Right ventricle myocardium inferior (tissue), 1 donor: ENCODE measurements at regions of chr10 and their contacts with region 1.

Region 1: DNA sequence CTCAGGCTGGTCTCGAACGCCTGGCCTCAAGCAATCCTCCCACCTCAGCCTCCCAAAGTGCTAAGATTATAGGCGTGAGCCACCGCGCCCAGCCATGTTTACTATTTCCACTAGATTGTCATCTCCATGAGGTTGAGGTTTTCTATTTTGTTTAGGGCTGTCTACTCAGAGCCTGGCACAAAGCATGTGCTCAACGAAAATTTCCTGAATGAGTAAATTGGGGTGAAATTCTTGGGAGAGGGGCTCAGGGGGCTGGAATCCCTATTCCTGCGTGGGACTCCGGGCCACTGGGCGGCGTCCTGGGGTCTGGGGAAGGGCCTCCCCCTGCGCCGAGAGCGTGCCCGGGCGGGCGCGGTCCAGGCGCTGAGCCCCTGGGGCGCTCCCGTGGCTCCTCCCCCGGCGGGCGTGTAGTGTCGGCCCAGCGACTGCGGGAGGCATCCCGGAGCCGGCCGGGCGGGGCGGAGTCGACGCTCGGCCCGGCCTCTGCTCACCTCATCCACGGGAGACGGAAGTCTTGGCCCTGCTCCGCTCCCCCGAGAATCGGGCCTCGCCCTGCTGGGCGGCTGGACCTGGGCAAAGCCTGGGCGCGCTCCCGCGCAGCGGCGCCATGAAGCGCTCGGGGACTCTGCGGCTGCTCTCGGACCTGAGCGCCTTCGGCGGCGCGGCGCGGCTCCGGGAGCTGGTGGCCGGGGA is at the start of gene HPS6:
- DNase-seq: peak; percentile 96
- ATAC-seq: peak; percentile 98
- total RNA-seq, gene HPS6: 11.0 TPM

Region 2: GRCh38 chr10:102001435-102002068 is 63.5 kb before region 1 on chr10:
- intact Hi-C with region 1: no loop called
- DNase-seq: no peak
- ATAC-seq: no peak

Region 3: DNA sequence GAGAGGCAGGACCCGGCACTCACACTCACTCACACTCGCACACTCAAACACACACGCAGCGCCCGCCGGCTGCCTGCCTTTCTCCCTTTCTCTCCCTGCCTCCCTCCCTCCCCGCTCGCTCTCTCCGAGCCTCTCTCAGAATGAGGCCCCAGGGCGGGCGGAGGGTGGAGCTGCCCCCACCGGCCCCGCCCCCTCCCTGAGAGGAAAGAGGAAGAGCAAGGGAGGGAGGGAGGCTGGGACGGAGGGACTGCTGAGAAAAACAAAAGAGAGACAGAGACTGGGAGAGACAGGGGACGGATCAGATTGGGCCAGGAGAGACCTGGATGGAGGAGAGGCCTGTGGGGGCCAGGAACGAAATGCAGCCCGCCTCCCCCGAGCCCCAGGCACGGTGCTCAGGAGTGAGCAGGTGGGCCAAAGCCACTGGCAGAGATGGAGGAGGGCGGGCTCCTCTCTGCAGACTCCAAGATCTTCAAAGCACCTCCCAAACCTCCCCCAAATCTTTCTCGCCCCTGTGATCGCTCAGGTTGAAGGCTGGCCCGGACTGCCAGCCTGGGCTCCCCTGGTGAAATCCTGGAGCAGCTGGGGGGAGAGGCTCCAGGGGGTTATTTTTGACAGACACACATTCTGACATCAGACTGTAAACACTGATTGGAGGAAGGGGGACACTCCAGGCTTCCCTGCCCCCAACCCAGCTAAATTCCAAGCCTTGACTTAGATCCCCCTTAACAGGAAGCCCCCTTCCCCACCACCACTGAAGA is 50.0 kb after region 1 on chr10:
- intact Hi-C with region 1: loop called (anchors 5 kb)
- DNase-seq: peak; percentile 97
- ATAC-seq: peak; percentile 83

Region 4: DNA sequence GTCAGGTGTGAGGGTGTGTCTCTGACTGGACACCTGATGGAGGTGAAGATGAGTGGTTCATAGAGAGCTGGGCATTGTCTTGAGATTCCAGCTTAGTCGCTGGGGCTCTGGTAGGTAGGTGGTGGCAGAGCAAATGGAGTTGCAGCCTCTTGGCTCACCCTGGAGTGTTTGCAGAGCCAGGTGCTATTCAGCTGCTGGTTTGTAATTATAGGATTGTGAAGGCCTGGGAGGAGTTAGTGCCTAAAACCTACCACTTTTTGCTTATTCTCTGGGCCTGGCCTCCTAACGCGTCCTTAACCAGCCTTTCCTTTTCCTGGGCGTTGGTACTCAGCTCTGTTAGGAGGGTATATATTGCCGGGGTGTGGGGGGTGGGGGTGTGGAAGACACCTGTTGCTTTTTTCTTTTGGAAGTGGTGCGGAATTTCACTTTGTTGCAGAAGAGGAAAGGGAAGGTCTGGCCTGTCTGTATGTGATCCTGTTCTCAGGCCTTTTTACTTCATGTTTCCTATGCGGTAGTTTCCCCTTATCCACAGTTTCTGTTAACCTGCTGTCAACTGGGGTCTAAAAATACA is 71.0 kb after region 1 on chr10:
- intact Hi-C with region 1: no loop called
- DNase-seq: peak; percentile 16
- ATAC-seq: no peak